Esophagus muscularis mucosa (tissue), 4 donors: ENCODE measurements at regions of chr1 and their contacts with region 1.

Region 1: DNA sequence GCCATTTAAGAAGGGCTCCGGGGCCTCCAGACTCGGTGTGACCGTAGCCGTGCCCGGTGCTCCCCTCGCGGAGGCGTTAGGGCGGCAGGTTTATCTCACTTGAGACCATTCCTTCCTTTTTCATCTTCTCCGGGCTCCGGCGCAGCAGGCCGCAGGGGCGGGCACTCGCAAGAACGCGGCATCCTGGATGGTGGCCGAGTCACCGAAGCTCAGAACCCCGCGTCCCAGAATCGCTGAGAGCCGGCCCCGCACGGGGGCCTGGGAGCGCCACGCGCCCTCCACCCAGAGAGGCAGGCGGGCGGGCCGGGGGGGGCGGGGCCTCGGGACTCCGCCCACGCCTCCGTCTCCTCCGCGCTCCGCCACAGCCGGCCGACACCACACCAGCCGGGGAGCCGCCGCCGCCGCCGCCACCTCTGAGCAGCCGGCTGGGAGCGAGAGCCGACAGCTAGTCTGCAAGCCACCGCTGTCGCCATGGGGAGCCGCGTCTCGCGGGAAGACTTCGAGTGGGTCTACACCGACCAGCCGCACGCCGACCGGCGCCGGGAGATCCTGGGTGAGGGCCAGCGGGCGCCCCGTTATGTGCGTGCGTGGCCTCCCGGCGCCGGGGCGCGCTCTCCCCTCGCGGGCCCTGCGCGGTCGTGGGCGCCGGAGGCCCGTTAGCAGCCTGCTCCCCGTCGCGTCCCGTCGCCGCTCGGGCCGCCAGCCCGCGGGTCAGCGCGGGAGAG is at the start of gene DEGS1:
- DNase-seq: peak; percentile 94
- H3K4me3 ChIP-seq: peak within 1 kb of the TSS; percentile 87 to 97 (median 93)
- H3K27ac ChIP-seq: peak within 1 kb of the TSS; percentile 98 to 99 (median 98)
- H3K4me1 ChIP-seq: peaks cover 24 to 47% (median 47%) of the 10 kb centered on the region in 4 donors
- H3K27me3 ChIP-seq: no peaks in the 10 kb centered on the region
- CTCF ChIP-seq: peak in 2 of 3 experiments; percentile 4 to 8
- EP300 ChIP-seq: no peak
- POLR2A ChIP-seq: peak; percentile 56
- total RNA-seq, gene DEGS1: 117 to 152 (median 124) TPM

Region 2: GRCh38 chr1:224113918-224114786 is 68.9 kb before region 1 on chr1 and contains the start of gene FBXO28:
- intact Hi-C with region 1: loop called (anchors 10 kb)
- DNase-seq: peak; percentile 97
- H3K4me3 ChIP-seq: peak within 1 kb of the TSS; percentile 85 to 98 (median 92)
- H3K27ac ChIP-seq: peak within 1 kb of the TSS; percentile 90 to 96 (median 93)
- H3K4me1 ChIP-seq: peaks cover 14 to 43% (median 35%) of the 10 kb centered on the region in 4 donors
- H3K27me3 ChIP-seq: peaks cover 0 to 16% (median 0%) of the 10 kb centered on the region in 4 donors
- CTCF ChIP-seq: no peak
- EP300 ChIP-seq: no peak
- POLR2A ChIP-seq: peak; percentile 73
- total RNA-seq, gene FBXO28: 23.1 to 29.8 (median 26.3) TPM

Region 3: DNA sequence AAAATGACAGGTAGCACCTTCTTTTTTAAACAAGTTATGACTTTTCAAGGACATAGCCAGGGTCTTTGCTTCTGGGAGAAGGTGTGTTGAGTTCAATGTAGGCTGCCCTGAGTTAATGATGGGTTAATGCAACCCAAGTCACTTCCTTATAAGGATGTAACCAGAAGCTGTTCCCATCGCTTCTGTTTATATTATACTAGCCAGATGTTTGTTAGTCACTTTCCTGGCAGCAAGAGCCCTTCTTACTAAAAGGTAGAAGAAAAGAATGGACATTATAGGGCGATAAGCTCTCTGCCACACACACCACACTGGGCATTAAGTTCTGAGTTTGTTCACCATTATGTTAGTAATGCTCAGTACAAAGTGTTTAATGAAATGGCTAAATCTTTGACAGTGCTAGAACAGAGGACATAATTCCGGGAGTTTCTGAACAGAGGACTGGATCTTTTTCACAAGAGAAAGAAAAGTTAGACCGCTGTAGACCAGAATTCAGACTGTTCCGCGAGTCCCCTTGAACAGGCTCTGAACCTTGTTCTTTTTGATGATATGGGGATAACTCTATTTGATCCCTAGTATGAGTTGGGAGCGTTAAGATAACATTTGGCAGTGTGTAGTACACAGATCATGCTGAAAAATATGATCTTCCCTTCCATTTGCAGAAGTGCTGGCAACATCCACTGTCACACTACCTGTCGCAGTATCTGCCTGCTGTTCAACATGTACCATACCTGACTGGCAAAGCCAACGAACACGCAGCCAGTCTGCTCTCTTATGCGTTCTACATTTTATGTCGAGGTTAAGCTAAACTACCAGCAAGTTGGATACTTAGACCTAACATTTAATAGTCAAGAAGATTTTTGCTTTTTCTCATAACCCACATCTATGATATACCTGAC is 41.0 kb after region 1 on chr1:
- intact Hi-C with region 1: loop called (anchors 5 kb)
- DNase-seq: no peak
- H3K4me3 ChIP-seq: peak overlapping the region in 1 of 4 donors; percentile 1
- H3K27ac ChIP-seq: peak overlapping the region; percentile 53 to 77 (median 74)
- H3K4me1 ChIP-seq: peaks cover 0 to 22% (median 16%) of the 10 kb centered on the region in 4 donors
- H3K27me3 ChIP-seq: no peaks in the 10 kb centered on the region
- CTCF ChIP-seq: no peak
- EP300 ChIP-seq: no peak
- POLR2A ChIP-seq: no peak